PC-3 (cell line): ENCODE measurements at regions of chr4 and their contacts with region 1.

Region 1: GRCh38 chr4:80072744-80073472 is at the start of gene ANTXR2:
- DNase-seq: peak; percentile 89
- ATAC-seq: peak; percentile 76
- H3K4me3 ChIP-seq: peak within 1 kb of the TSS; percentile 94
- H3K27ac ChIP-seq: peak within 1 kb of the TSS; percentile 91
- H3K4me1 ChIP-seq: peaks cover 56% of the 10 kb centered on the region
- H3K27me3 ChIP-seq: no peaks in the 10 kb centered on the region
- CTCF ChIP-seq: no peak
- total RNA-seq, gene ANTXR2: 43.9 and 56.3 TPM in 2 replicates

Region 2: GRCh38 chr4:80097400-80098177 is 24.7 kb after region 1 on chr4:
- CTCF ChIA-PET with region 1: no interaction called
- POLR2A ChIA-PET with region 1: interaction called, 6 read pairs
- intact Hi-C with region 1: loop called (anchors 1 kb)
- DNase-seq: peak; percentile 88
- ATAC-seq: peak; percentile 77
- H3K4me3 ChIP-seq: peak overlapping the region; percentile 14; the same call in 1 of the 2 replicates
- H3K27ac ChIP-seq: peak overlapping the region; percentile 83
- H3K4me1 ChIP-seq: peaks cover 59% of the 10 kb centered on the region
- H3K27me3 ChIP-seq: no peaks in the 10 kb centered on the region
- CTCF ChIP-seq: no peak

Region 3: DNA sequence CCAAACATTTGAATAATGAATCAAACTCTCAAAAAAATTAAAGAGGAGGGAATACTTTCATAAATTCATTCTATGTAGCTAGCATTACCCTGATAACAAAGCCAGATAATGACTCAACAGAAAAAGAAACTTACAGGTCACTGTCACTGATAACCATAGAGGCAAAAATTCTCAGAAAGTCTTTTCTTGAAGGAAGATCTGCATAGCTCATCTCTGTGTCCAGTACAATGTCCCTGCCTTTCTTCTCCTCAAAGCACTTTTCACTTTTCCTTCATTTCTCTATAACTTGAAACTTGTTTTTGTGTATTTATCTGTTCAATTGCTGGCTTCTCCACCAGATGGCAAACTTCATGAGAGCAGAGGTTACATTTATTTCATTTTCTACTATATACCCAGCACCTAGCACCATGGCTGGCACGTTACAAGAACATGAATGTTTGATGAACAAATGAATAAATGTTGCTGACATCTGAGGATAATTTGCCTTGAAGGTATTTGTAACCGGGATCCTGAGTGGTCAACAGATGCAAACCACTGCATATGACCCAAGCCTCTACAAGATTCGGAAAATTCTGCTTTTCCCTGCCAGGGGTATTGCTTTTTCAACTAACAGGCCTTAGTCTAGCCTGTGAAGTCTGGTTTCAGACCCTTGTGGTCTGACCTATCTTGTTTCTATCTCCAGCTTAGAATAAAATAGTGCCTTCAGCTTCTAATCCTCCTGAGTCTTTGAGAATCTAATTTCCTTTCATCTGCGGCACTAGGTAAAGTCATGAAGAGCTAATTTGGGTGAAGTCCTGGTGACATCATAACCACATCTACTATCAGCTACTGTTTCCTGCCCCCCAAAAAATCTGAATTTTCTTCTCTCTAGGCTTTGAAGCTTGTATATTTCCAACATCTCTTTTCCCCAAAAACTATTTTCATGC is 52.6 kb after region 1 on chr4:
- CTCF ChIA-PET with region 1: no interaction called
- POLR2A ChIA-PET with region 1: no interaction called
- intact Hi-C with region 1: loop called (anchors 1 kb)
- DNase-seq: peak; percentile 48
- ATAC-seq: peak; percentile 41
- H3K4me3 ChIP-seq: no peak overlapping the region
- H3K27ac ChIP-seq: peak overlapping the region; percentile 85
- H3K4me1 ChIP-seq: peaks cover 42% of the 10 kb centered on the region
- H3K27me3 ChIP-seq: no peaks in the 10 kb centered on the region
- CTCF ChIP-seq: peak; percentile 68

Region 4: GRCh38 chr4:80136259-80136658 is 63.4 kb after region 1 on chr4:
- CTCF ChIA-PET with region 1: no interaction called
- POLR2A ChIA-PET with region 1: no interaction called
- intact Hi-C with region 1: loop called (anchors 2 kb)
- DNase-seq: peak; percentile 68
- ATAC-seq: peak; percentile 80
- H3K4me3 ChIP-seq: no peak overlapping the region
- H3K27ac ChIP-seq: peak overlapping the region; percentile 97
- H3K4me1 ChIP-seq: peaks cover 54% of the 10 kb centered on the region
- H3K27me3 ChIP-seq: no peaks in the 10 kb centered on the region
- CTCF ChIP-seq: no peak

Region 5: GRCh38 chr4:80184053-80184790 is 111.3 kb after region 1 on chr4:
- CTCF ChIA-PET with region 1: interaction called, 4 read pairs
- POLR2A ChIA-PET with region 1: interaction called, 6 read pairs
- intact Hi-C with region 1: loop called (anchors 1 kb)
- DNase-seq: peak; percentile 85
- ATAC-seq: peak; percentile 80
- H3K4me3 ChIP-seq: peak overlapping the region; percentile 98
- H3K27ac ChIP-seq: peak overlapping the region; percentile 71
- H3K4me1 ChIP-seq: peaks cover 21% of the 10 kb centered on the region
- H3K27me3 ChIP-seq: no peaks in the 10 kb centered on the region
- CTCF ChIP-seq: peak; percentile 76

Region 6: DNA sequence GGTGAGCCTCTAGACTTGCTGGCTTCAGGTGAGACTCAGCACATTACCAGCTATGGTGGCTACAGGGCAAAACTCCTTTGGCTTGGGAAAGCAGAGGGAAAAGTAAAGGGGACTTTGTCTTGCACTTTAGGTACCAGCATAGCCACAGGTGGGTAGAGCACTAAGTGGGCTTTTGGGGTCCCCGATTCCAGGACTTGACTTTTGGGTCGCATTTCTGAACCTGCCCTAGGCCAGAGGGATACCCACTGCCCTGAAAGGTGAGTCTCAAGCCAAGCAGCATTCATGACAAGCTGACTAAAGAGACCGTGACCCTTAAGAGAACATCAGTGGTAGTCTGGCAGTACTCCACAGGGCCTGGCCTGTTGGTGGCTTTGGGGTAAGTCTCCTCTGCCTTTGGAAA is 487.4 kb after region 1 on chr4:
- CTCF ChIA-PET with region 1: no interaction called
- POLR2A ChIA-PET with region 1: no interaction called
- intact Hi-C with region 1: no loop called
- DNase-seq: no peak
- ATAC-seq: no peak
- H3K4me3 ChIP-seq: no peak overlapping the region
- H3K27ac ChIP-seq: no peak overlapping the region
- H3K4me1 ChIP-seq: no peaks in the 10 kb centered on the region
- H3K27me3 ChIP-seq: no peaks in the 10 kb centered on the region
- CTCF ChIP-seq: no peak